Colonic mucosa (tissue), 4 donors: ENCODE measurements at regions of chr13 and their contacts with region 1.

Region 1: GRCh38 chr13:48334534-48335127 is 31.1 kb downstream of the RB1 start:
- DNase-seq: no peak
- H3K4me3 ChIP-seq: no peak overlapping the region
- H3K27ac ChIP-seq: no peak overlapping the region
- H3K4me1 ChIP-seq: no peaks in the 10 kb centered on the region
- H3K27me3 ChIP-seq: no peaks in the 10 kb centered on the region
- CTCF ChIP-seq: peak; percentile 49

Region 2: GRCh38 chr13:48775804-48776203 is 441.2 kb after region 1 on chr13:
- intact Hi-C with region 1: loop called (anchors 10 kb)
- DNase-seq: no peak
- H3K4me3 ChIP-seq: no peak overlapping the region
- H3K27ac ChIP-seq: no peak overlapping the region
- H3K4me1 ChIP-seq: no peaks in the 10 kb centered on the region
- H3K27me3 ChIP-seq: no peaks in the 10 kb centered on the region
- CTCF ChIP-seq: no peak